B cell (primary cell): ENCODE measurements at regions of chr19 and their contacts with region 1.

Region 1: GRCh38 chr19:55301459-55302317 is 17.9 kb downstream of the BRSK1 start:
- DNase-seq: peak; percentile 95
- ATAC-seq: peak; percentile 91
- H3K4me3 ChIP-seq: peak overlapping the region in 4 of 5 experiments; percentile 35 to 53 (median 49)
- H3K4me3 Mint-ChIP-seq: peak overlapping the region; percentile 90
- H3K27ac ChIP-seq: peak overlapping the region; percentile 25 to 64
- H3K27ac Mint-ChIP-seq: peak overlapping the region; percentile 87
- H3K4me1 ChIP-seq: peaks cover 8 to 15% of the 10 kb centered on the region in 2 donors
- H3K4me1 Mint-ChIP-seq: peaks cover 12% of the 10 kb centered on the region
- H3K27me3 ChIP-seq: no peaks in the 10 kb centered on the region
- H3K27me3 Mint-ChIP-seq: peaks cover 6% of the 10 kb centered on the region
- CTCF ChIP-seq: peak; percentile 92

Region 2: DNA sequence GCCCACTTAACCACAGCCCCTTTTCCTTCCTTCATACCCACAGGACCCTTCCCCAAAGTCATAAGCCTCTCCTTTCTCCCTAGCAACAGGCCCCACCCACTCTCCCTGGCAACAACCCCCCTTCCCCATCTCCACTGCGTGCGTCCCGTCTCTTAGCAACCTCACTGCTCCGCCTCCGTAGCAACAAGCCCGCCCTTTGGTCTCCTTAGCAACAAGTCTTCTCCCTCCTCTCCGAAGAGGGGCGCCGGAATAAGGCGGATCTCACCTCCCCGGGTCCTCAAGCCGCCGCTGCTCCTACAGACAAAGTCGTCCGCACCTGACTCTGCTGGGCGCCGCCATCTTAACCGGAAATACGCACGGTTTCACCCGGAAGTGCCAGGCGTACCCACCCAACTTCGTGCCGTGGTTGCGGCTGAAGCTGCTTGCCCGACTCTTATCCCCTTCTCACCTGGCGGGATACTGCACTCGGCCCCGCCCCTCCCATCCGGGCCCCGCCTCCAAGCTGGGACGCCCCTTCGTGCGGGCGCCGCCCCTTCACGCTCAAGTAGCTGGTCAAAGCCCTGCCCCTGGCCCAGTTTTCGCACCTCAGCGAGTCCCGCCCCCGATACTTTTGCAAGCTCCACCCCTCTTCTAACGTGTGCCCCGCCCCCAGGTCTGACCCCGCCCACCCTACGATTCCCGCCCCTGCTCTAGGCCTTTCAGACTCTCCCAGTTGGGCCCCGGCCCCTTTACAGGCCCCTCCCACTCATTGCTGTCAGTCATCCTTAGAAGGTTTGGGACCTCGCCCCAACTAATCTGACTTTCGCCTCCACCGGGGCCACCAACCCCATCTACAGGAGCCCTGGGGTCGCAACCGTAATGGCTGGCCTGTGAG is 21.7 kb before region 1 on chr19 and contains the start of gene HSPBP1:
- CTCF ChIA-PET with region 1: interaction called, 12 read pairs
- POLR2A ChIA-PET with region 1: interaction called, 3 read pairs
- intact Hi-C with region 1: loop called (anchors 1 kb)
- DNase-seq: peak; percentile 99
- ATAC-seq: peak; percentile 85
- H3K4me3 ChIP-seq: peak within 1 kb of the TSS; percentile 63 to 83 (median 71)
- H3K4me3 Mint-ChIP-seq: peak within 1 kb of the TSS; percentile 99
- H3K27ac ChIP-seq: peak within 1 kb of the TSS; percentile 87 to 96
- H3K27ac Mint-ChIP-seq: peak within 1 kb of the TSS; percentile 99
- H3K4me1 ChIP-seq: peaks cover 56 to 71% of the 10 kb centered on the region in 2 donors
- H3K4me1 Mint-ChIP-seq: peaks cover 68% of the 10 kb centered on the region
- H3K27me3 ChIP-seq: peaks cover 0 to 9% (median 3%) of the 10 kb centered on the region in 4 experiments
- H3K27me3 Mint-ChIP-seq: peaks cover 7% of the 10 kb centered on the region
- CTCF ChIP-seq: no peak
- total RNA-seq, gene HSPBP1: 15.6 and 18.2 TPM in 2 replicates

Region 3: DNA sequence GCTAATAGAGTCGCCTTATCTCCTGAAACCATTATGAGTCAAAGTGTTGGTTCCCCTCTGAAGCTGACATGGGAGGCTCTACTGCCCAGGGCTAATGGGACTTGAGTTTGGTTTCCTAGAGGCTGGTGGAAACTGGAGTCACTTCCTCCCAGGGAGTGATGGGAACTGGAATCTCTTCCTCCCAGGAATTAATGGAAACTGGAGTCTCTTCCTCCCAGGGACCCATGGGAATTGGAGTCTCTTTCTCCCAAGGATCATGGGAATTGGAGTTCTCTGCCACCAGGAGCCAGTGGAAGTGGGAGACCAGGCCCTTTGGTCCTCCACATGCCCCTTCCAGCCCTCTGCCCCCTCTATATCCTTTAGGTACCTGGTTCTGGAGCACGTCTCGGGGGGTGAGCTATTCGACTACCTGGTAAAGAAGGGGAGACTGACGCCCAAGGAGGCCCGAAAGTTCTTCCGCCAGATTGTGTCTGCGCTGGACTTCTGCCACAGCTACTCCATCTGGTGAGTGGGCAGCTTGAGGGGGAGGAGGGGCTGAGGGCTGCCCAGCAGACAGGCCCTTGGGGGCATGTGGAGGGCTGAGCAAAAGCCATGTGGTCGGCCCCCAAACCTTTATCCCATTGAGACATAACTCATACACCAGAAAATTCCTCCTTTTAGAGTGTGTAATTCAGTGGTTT is 12.4 kb before region 1 on chr19:
- CTCF ChIA-PET with region 1: interaction called, 24 read pairs
- POLR2A ChIA-PET with region 1: interaction called, 9 read pairs
- intact Hi-C with region 1: no loop called
- DNase-seq: no peak
- ATAC-seq: no peak
- H3K4me3 ChIP-seq: no peak overlapping the region
- H3K4me3 Mint-ChIP-seq: no peak overlapping the region
- H3K27ac ChIP-seq: no peak overlapping the region
- H3K27ac Mint-ChIP-seq: no peak overlapping the region
- H3K4me1 ChIP-seq: peaks cover 4 to 6% of the 10 kb centered on the region in 2 donors
- H3K4me1 Mint-ChIP-seq: peaks cover 5% of the 10 kb centered on the region
- H3K27me3 ChIP-seq: no peaks in the 10 kb centered on the region
- H3K27me3 Mint-ChIP-seq: no peaks in the 10 kb centered on the region
- CTCF ChIP-seq: no peak

Region 4: DNA sequence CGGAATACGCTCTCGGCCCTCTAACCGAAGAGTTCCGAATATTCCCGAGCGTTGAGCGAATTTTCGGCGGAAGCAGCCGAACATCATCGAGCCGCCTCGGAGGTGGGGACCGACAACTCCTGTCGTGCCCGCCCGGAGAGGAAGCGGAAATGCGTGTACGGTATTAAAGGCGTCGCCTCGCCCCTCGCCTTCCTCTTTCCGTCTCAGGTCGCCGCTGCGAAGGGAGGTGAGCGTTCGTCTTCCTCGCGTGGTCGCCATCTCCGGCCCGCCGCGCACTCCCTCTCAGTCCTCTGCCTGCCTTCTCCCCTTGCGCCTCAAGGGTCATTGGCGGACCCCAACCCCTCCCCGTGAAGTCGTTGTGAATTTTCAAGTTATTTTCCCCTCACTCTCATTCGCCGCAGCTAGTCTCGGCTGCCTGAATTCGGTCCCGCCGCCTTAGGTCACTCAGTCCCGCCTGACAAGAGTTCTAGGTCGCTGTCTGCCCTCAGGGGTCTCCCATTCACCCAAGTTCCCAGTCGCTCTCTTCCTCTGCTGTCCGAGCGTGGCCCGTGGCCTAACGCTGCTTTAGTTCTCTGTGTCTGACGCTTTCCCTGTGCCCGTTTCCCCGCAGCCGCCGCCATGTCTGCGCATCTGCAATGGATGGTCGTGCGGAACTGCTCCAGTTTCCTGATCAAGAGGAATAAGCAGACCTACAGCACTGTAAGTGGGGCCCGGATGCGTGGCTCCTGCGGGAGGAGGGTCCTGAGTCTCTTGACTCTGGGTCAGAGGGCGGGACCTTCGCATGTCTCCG is 84.2 kb after region 1 on chr19 and contains the start of gene RPL28:
- CTCF ChIA-PET with region 1: interaction called, 27 read pairs
- POLR2A ChIA-PET with region 1: no interaction called
- intact Hi-C with region 1: loop called (anchors 1 kb)
- DNase-seq: peak; percentile 99
- ATAC-seq: peak; percentile 81
- H3K4me3 ChIP-seq: peak within 1 kb of the TSS; percentile 85 to 99 (median 97)
- H3K4me3 Mint-ChIP-seq: peak within 1 kb of the TSS; percentile 100
- H3K27ac ChIP-seq: peak within 1 kb of the TSS; percentile 96
- H3K27ac Mint-ChIP-seq: peak within 1 kb of the TSS; percentile 100
- H3K4me1 ChIP-seq: peaks cover 40 to 57% of the 10 kb centered on the region in 2 donors
- H3K4me1 Mint-ChIP-seq: peaks cover 68% of the 10 kb centered on the region
- H3K27me3 ChIP-seq: no peaks in the 10 kb centered on the region
- H3K27me3 Mint-ChIP-seq: no peaks in the 10 kb centered on the region
- CTCF ChIP-seq: no peak
- total RNA-seq, gene RPL28: 2,397 and 2,578 TPM in 2 replicates